Aorta (tissue), 5 donors: ENCODE measurements at regions of chr9 and their contacts with region 1.

Region 1: DNA sequence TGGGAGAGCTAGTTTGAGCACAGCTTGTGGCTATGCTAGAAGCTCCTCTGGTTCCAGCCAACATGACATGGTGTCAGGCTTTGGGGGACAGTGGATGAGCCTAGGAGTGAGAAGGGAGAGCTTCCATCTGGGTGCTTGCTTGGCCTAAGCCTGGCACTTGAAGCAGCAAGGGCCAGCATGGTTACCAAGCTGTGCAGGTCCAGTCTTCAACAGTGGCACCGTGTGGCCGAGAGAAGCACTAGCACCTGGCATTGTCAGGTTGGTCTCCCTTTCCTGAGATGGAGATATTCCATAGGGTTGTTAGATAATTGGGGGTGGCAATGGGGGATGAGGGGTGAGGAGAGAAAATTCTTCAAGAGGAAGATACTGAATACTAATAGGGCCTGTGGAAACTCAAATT is 261.9 kb downstream of the PBX3 start:
- DNase-seq: no peak
- ATAC-seq: no peak
- H3K4me3 ChIP-seq: no peak overlapping the region
- H3K27ac ChIP-seq: no peak overlapping the region
- H3K4me1 ChIP-seq: no peaks in the 10 kb centered on the region
- H3K27me3 ChIP-seq: no peaks in the 10 kb centered on the region

Region 2: GRCh38 chr9:125815568-125815967 is 193.5 kb before region 1 on chr9:
- intact Hi-C with region 1: loop called in 1 of 2 experiments (anchors 10 kb)
- DNase-seq: no peak
- ATAC-seq: no peak
- H3K4me3 ChIP-seq: no peak overlapping the region
- H3K27ac ChIP-seq: no peak overlapping the region
- H3K4me1 ChIP-seq: no peaks in the 10 kb centered on the region
- H3K27me3 ChIP-seq: no peaks in the 10 kb centered on the region

Region 3: DNA sequence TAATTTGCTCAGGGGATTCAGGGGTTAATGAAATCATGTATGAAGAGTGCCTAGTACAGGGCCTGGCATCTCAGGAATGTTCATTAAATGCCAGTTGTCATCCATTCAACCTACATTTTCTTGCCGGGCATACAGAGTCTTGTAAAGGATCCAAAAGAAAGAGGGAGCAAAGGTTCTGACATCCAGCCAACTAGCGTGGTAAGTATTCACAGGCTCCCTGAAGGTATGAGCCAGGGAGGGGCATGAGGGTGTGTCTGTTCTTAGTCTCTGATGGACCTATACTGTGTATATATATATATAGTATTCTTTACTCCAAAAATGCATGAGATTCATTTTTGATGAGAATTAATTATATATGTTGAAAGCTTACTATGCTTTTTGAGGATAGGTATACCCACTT is 59.8 kb before region 1 on chr9:
- intact Hi-C with region 1: no loop called
- DNase-seq: no peak
- ATAC-seq: no peak
- H3K4me3 ChIP-seq: no peak overlapping the region
- H3K27ac ChIP-seq: no peak overlapping the region
- H3K4me1 ChIP-seq: no peaks in the 10 kb centered on the region
- H3K27me3 ChIP-seq: no peaks in the 10 kb centered on the region